Caco-2 (cell line): ENCODE measurements at regions of chr10 and their contacts with region 1.

Region 1: GRCh38 chr10:119253433-119254174 is 46.2 kb downstream of the GRK5 start:
- DNase-seq: peak; percentile 82 to 88
- H3K4me3 ChIP-seq: no peak overlapping the region
- H3K4me3 Mint-ChIP-seq: peak overlapping the region; percentile 52
- H3K27ac Mint-ChIP-seq: peak overlapping the region; percentile 94
- H3K4me1 ChIP-seq: peaks cover 47% of the 10 kb centered on the region
- H3K4me1 Mint-ChIP-seq: peaks cover 35% of the 10 kb centered on the region
- H3K27me3 ChIP-seq: no peaks in the 10 kb centered on the region
- H3K27me3 Mint-ChIP-seq: no peaks in the 10 kb centered on the region
- CTCF ChIP-seq: peak in 1 of 2 experiments; percentile 26

Region 2: GRCh38 chr10:119243488-119243887 is 10.1 kb before region 1 on chr10:
- CTCF ChIA-PET with region 1: interaction called, 7 read pairs
- POLR2A ChIA-PET with region 1: no interaction called
- intact Hi-C with region 1: loop called (anchors 1 kb)
- DNase-seq: peak; percentile 59 to 68
- H3K4me3 ChIP-seq: peak overlapping the region; percentile 15
- H3K4me3 Mint-ChIP-seq: peak overlapping the region; percentile 44
- H3K27ac Mint-ChIP-seq: peak overlapping the region; percentile 34
- H3K4me1 ChIP-seq: peaks cover 40% of the 10 kb centered on the region
- H3K4me1 Mint-ChIP-seq: peaks cover 30% of the 10 kb centered on the region
- H3K27me3 ChIP-seq: no peaks in the 10 kb centered on the region
- H3K27me3 Mint-ChIP-seq: no peaks in the 10 kb centered on the region
- CTCF ChIP-seq: no peak

Region 3: GRCh38 chr10:119270762-119271366 is 17.3 kb after region 1 on chr10:
- CTCF ChIA-PET with region 1: interaction called, 10 read pairs
- POLR2A ChIA-PET with region 1: interaction called, 9 read pairs
- intact Hi-C with region 1: no loop called
- DNase-seq: peak; percentile 68 to 87
- H3K4me3 ChIP-seq: no peak overlapping the region
- H3K4me3 Mint-ChIP-seq: peak overlapping the region; percentile 71
- H3K27ac Mint-ChIP-seq: peak overlapping the region; percentile 88
- H3K4me1 ChIP-seq: peaks cover 29% of the 10 kb centered on the region
- H3K4me1 Mint-ChIP-seq: peaks cover 17% of the 10 kb centered on the region
- H3K27me3 ChIP-seq: no peaks in the 10 kb centered on the region
- H3K27me3 Mint-ChIP-seq: no peaks in the 10 kb centered on the region
- CTCF ChIP-seq: no peak

Region 4: DNA sequence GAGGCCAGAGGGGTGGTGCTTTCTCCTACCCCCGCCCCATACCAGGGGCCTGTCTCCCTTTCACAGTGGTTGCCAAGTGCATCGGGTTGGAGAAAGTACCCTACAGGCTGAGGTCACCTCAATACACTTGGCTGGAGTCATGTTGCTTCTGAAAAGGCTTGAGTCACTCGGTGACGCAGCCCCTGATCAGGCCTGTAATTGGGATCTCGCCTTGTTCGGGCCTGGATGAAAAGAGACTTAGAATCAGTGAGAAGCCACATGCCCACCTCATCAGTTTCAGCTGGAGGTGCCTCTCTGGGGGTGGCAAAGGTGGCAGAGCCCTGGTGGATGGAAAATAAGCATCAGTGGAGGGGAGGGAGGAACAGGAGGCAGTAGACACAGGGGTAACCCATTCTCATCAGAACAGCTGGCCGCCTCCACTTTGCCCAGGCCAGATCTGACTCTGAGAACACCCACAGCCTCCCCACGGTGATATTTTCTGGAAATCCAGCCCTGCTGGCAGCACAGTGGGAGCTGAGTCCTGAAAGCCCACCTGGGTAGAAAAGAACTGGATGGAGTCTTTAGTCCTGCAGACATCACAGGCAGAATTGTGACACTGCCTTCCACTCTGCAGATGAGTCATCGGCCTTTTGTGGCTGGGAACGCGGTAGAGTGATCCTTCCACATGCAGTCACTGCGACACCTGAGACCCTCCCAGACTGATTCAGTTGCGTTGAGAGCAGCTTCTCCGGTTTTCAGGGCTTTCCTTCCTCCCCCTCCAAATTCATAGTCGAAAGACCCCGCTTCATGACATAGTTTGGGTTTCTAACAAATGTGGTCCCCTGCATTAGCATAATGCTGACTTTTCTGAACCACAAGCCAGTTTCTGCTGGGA is 61.8 kb after region 1 on chr10:
- CTCF ChIA-PET with region 1: no interaction called
- POLR2A ChIA-PET with region 1: no interaction called
- intact Hi-C with region 1: loop called (anchors 5 kb)
- DNase-seq: peak; percentile 56 to 66
- H3K4me3 ChIP-seq: no peak overlapping the region
- H3K4me3 Mint-ChIP-seq: no peak overlapping the region
- H3K27ac Mint-ChIP-seq: peak overlapping the region; percentile 97
- H3K4me1 ChIP-seq: peaks cover 51% of the 10 kb centered on the region
- H3K4me1 Mint-ChIP-seq: peaks cover 48% of the 10 kb centered on the region
- H3K27me3 ChIP-seq: no peaks in the 10 kb centered on the region
- H3K27me3 Mint-ChIP-seq: no peaks in the 10 kb centered on the region
- CTCF ChIP-seq: no peak

Region 5: GRCh38 chr10:119555178-119555784 is 301.7 kb after region 1 on chr10:
- CTCF ChIA-PET with region 1: no interaction called
- POLR2A ChIA-PET with region 1: no interaction called
- intact Hi-C with region 1: no loop called
- DNase-seq: no peak
- H3K4me3 ChIP-seq: no peak overlapping the region
- H3K4me3 Mint-ChIP-seq: no peak overlapping the region
- H3K27ac Mint-ChIP-seq: no peak overlapping the region
- H3K4me1 ChIP-seq: no peaks in the 10 kb centered on the region
- H3K4me1 Mint-ChIP-seq: no peaks in the 10 kb centered on the region
- H3K27me3 ChIP-seq: no peaks in the 10 kb centered on the region
- H3K27me3 Mint-ChIP-seq: peaks cover 4% of the 10 kb centered on the region
- CTCF ChIP-seq: no peak